ENCODE measurements at regions of chr1 and their contacts with region 1.

Region 1: DNA sequence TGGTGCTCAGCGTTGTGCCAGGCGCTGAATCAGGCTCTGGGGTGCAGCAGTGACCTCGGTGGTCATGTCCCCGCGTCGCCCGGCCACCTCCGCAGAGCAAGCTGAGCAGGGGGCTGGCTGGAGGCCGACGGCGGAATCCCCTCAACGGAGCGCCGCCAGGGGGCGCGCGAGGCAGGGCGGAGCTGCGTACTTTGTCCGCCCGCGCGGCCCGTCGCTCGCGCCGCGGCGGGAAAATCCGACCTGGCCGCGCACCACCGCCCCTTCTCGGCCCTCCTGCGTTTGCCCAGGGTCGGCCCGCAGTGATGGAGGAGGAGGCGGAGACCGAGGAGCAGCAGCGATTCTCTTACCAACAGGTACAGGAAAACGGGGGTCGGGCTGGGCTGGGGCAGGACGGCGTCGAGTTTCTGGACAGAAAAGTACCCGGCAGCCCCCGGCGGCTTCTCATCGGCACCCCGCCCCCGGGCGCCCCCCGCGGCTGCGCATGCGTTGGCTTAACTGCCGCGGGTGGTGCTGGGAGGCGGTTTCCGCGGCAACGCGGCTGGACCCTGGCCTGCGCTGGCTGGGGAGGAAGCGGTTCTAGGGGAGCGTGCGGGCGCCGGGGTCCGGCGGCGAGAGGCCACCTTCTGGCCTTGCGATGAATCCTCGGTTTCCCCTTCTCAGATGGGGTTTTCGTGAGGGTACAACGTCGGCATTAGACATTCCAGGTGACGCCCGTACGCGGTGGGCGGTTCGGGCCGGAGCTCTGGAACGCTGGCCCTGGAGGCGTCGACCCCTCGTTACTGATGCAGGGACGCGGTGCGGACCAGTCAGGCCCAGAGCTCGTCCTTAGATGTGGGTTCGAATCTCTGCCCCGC is at the start of gene CENPS:
- DNase-seq: peak; percentile 68 to 79
- ATAC-seq: peak; percentile 92 to 93
- H3K4me3 ChIP-seq: peak within 1 kb of the TSS; percentile 69 to 90 (median 85)
- H3K27ac ChIP-seq: peak within 1 kb of the TSS; percentile 25 to 77 (median 68)
- H3K4me1 ChIP-seq: peaks cover 8 to 14% of the 10 kb centered on the region in 2 donors
- H3K27me3 ChIP-seq: no peaks in the 10 kb centered on the region
- CTCF ChIP-seq: peak; percentile 89 to 100 (median 98)
- POLR2A ChIP-seq: peak in 1 of 2 donors; percentile 20
- total RNA-seq, gene CENPS: 0.42 to 3.8 (median 2.9) TPM

Region 2: GRCh38 chr1:9629445-9630201 is 800.8 kb before region 1 on chr1:
- in situ Hi-C with region 1: loop called in 1 of 4 experiments (anchors 25 kb)
- intact Hi-C with region 1: loop called (anchors 1 kb)
- DNase-seq: peak; percentile 39 to 42
- ATAC-seq: no peak
- H3K4me3 ChIP-seq: no peak overlapping the region
- H3K27ac ChIP-seq: no peak overlapping the region
- H3K4me1 ChIP-seq: peaks cover 0 to 5% of the 10 kb centered on the region in 2 donors
- H3K27me3 ChIP-seq: peaks cover 0 to 10% (median 0%) of the 10 kb centered on the region in 3 donors
- CTCF ChIP-seq: no peak
- POLR2A ChIP-seq: no peak

Region 3: DNA sequence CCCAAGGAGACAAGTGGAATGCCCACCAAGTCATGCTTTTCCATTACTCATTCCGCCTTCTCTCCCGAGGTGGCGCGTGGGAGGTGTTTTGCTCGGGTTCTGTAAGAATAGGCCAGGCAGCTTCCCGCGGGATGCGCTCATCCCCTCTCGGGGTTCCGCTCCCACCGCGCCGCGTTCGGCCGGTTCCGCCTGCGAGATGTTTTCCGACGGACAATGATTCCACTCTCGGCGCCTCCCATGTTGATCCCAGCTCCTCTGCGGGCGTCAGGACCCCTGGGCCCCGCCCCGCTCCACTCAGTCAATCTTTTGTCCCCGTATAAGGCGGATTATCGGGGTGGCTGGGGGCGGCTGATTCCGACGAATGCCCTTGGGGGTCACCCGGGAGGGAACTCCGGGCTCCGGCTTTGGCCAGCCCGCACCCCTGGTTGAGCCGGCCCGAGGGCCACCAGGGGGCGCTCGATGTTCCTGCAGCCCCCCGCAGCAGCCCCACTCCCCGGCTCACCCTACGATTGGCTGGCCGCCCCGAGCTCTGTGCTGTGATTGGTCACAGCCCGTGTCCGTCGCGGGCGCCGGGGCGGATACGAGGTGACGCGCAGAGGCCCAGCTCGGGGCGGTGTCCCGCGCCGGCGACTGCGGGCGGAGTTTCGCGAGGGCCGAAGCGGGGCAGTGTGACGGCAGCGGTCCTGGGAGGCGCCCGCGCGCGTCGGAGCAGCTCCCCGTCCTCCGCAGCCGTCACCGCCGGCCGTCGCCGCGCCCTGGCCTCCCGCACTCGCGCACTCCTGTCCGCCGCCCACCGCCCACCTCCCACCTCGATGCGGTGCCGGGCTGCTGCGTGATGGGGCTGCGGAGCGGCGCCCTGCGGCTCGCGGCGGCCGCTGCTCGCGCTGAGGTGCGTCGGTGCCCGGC is 220.3 kb before region 1 on chr1 and contains the start of gene KIF1B:
- in situ Hi-C with region 1: no loop called
- intact Hi-C with region 1: loop called (anchors 2 kb)
- DNase-seq: peak; percentile 98 to 99
- ATAC-seq: peak; percentile 55 to 56
- H3K4me3 ChIP-seq: peak within 1 kb of the TSS; percentile 83 to 89 (median 88)
- H3K27ac ChIP-seq: peak within 1 kb of the TSS; percentile 98 to 99 (median 99)
- H3K4me1 ChIP-seq: peaks cover 37 to 38% of the 10 kb centered on the region in 2 donors
- H3K27me3 ChIP-seq: no peaks in the 10 kb centered on the region
- CTCF ChIP-seq: peak; percentile 99 to 100 (median 100)
- POLR2A ChIP-seq: peak; percentile 100
- total RNA-seq, gene KIF1B: 203 to 445 (median 306) TPM

Region 4: GRCh38 chr1:10398734-10399623 is 31.5 kb before region 1 on chr1 and contains the start of gene PGD:
- in situ Hi-C with region 1: no loop called
- intact Hi-C with region 1: loop called (anchors 2 kb)
- DNase-seq: peak; percentile 96 to 98
- ATAC-seq: peak; percentile 90 to 93
- H3K4me3 ChIP-seq: peak within 1 kb of the TSS; percentile 71 to 99 (median 87)
- H3K27ac ChIP-seq: peak within 1 kb of the TSS; percentile 82 to 93 (median 92)
- H3K4me1 ChIP-seq: peaks cover 0 to 21% of the 10 kb centered on the region in 2 donors
- H3K27me3 ChIP-seq: no peaks in the 10 kb centered on the region
- CTCF ChIP-seq: peak in 1 of 5 experiments; percentile 15
- POLR2A ChIP-seq: peak; percentile 67 to 81
- total RNA-seq, gene PGD: 23.8 to 48.7 (median 39.3) TPM

Region 5: GRCh38 chr1:10494754-10495474 is 64.5 kb after region 1 on chr1:
- in situ Hi-C with region 1: loop called in 1 of 4 experiments (anchors 5 kb)
- intact Hi-C with region 1: loop called (anchors 1 kb)
- DNase-seq: peak; percentile 31 to 48
- ATAC-seq: peak; percentile 87 to 93
- H3K4me3 ChIP-seq: peak overlapping the region in 1 of 4 donors; percentile 2
- H3K27ac ChIP-seq: peak overlapping the region; percentile 56 to 78 (median 66)
- H3K4me1 ChIP-seq: peaks cover 20 to 22% of the 10 kb centered on the region in 2 donors
- H3K27me3 ChIP-seq: no peaks in the 10 kb centered on the region
- CTCF ChIP-seq: peak; percentile 70 to 89 (median 86)
- POLR2A ChIP-seq: no peak